Transverse colon (tissue), 4 donors: ENCODE measurements at regions of chr17 and their contacts with region 1.

Region 1: GRCh38 chr17:42200702-42201101 is 6.4 kb upstream of the GHDC start:
- DNase-seq: peak; percentile 39
- H3K4me3 ChIP-seq: no peak overlapping the region
- H3K27ac ChIP-seq: peak overlapping the region; percentile 44 to 52 (median 49)
- H3K4me1 ChIP-seq: peaks cover 0 to 15% (median 7%) of the 10 kb centered on the region in 4 donors
- H3K27me3 ChIP-seq: no peaks in the 10 kb centered on the region
- CTCF ChIP-seq: no peak
- EP300 ChIP-seq: no peak
- POLR2A ChIP-seq: no peak

Region 2: DNA sequence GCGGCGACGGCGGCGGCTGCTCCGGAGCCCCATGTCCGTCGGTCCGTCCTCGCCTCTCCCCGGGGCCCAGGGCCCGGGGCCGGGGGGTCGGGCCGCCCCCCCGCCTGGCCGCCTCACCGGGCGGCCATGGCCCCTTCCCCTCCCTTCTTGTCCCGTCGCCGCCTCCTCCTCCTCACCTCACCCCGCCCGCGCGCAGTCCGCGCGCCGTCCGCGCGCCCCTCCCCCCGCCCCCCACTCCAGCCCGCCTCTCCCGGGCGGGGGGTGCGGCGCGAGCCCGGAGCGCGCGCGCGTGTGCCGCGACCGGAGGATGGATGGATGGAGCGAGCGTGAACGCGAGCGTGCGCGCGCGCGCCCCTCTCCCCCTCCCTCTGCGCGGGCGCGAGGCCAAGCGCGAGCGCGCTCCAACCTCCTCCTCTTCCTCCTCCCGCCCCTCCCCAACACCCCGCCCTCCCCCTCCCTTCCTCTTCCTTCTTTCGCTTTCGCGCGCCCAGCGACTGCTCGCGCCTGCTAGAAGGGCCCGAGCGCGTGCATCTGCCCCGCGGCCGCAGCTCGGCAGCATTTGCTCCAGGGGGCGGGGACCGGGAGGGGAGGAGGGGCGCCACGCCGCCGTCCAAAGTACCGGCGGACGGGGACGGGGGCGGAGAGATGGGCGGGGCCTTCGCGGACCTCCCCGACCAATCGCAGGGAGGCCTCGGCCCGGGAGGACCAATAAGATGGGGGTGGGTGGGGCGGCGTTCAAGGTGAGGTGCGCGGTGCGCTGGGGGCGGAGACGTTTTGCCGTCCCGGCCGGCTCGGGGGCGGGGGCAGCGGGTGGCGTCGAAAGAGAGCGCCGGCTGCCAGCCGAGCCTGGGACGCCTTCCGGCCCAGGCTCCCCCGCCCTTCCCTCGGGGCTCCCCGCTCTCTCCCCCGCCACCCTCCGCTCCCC is 1999.1 kb after region 1 on chr17 and contains the start of gene ATXN7L3:
- in situ Hi-C with region 1: no loop called
- intact Hi-C with region 1: loop called (anchors 10 kb)
- DNase-seq: peak; percentile 100
- H3K4me3 ChIP-seq: peak within 1 kb of the TSS; percentile 77 to 99 (median 88)
- H3K27ac ChIP-seq: peak within 1 kb of the TSS; percentile 94 to 100 (median 98)
- H3K4me1 ChIP-seq: peaks cover 10 to 42% (median 15%) of the 10 kb centered on the region in 4 donors
- H3K27me3 ChIP-seq: no peaks in the 10 kb centered on the region
- CTCF ChIP-seq: no peak
- EP300 ChIP-seq: no peak
- POLR2A ChIP-seq: no peak
- total RNA-seq, gene ATXN7L3: 44.1 to 77.4 (median 52.3) TPM